GM23248 (cell line): ENCODE measurements at regions of chr7 and their contacts with region 1.

Region 1: GRCh38 chr7:27160546-27161213 is 4.2 kb upstream of the HOXA7 start:
- DNase-seq: peak; percentile 91
- H3K4me3 ChIP-seq: peak overlapping the region; percentile 83
- H3K27ac ChIP-seq: peak overlapping the region; percentile 99
- H3K4me1 ChIP-seq: peaks cover under 1% of the 10 kb centered on the region
- H3K27me3 ChIP-seq: no peaks in the 10 kb centered on the region

Region 2: GRCh38 chr7:26199301-26200037 is 961.2 kb before region 1 on chr7:
- in situ Hi-C with region 1: loop called (anchors 10 kb)
- DNase-seq: peak; percentile 77
- H3K4me3 ChIP-seq: peak overlapping the region; percentile 86
- H3K27ac ChIP-seq: peak overlapping the region; percentile 95
- H3K4me1 ChIP-seq: peaks cover 42% of the 10 kb centered on the region
- H3K27me3 ChIP-seq: no peaks in the 10 kb centered on the region